CD8-positive, alpha-beta T cell (primary cell): ENCODE measurements at regions of chr2 and their contacts with region 1.

Region 1: DNA sequence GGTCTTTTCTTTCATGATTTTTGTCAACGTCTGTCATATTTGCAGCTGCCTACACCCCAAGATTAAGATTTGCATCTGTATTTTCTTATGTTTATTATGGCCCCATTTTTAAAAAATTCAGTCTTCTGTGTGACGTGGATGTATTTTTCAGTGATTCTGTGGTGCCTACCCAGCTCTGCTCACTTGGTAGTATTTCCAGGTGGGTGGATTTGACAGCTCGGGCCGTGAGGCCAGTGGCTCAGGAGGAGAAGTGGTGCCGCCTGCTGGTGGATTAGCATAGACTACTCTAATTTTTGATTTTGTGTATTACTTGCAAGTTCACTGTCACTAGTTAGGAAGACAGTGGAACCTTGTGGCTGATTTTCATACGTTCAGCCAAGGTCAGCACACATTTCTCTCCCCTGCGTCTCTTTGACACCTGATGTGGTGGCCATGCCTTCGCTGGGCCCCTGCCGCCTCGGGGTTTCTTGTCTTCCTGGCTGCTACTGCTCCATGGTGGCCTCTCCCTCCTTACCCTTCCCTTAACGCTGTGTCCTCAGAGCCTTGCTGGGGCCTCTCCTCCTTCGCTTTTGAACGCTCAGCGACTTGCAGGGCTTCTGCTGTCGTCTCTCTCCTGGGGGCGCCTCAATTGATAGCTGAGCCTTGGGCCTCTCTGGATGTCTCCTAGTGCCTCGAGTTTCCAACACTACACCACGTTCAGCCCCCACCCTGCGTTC is 89.3 kb downstream of the DGKD start:
- DNase-seq: peak; percentile 69 to 89 (median 87)
- ATAC-seq: peak; percentile 99
- H3K4me3 ChIP-seq: no peak overlapping the region
- H3K4me3 Mint-ChIP-seq: no peak overlapping the region
- H3K27ac ChIP-seq: no peak overlapping the region
- H3K27ac Mint-ChIP-seq: peak overlapping the region; percentile 69
- H3K4me1 ChIP-seq: peaks cover 14% of the 10 kb centered on the region
- H3K4me1 Mint-ChIP-seq: peaks cover 34% of the 10 kb centered on the region
- H3K27me3 ChIP-seq: no peaks in the 10 kb centered on the region
- H3K27me3 Mint-ChIP-seq: no peaks in the 10 kb centered on the region
- CTCF ChIP-seq: peak; percentile 87

Region 2: DNA sequence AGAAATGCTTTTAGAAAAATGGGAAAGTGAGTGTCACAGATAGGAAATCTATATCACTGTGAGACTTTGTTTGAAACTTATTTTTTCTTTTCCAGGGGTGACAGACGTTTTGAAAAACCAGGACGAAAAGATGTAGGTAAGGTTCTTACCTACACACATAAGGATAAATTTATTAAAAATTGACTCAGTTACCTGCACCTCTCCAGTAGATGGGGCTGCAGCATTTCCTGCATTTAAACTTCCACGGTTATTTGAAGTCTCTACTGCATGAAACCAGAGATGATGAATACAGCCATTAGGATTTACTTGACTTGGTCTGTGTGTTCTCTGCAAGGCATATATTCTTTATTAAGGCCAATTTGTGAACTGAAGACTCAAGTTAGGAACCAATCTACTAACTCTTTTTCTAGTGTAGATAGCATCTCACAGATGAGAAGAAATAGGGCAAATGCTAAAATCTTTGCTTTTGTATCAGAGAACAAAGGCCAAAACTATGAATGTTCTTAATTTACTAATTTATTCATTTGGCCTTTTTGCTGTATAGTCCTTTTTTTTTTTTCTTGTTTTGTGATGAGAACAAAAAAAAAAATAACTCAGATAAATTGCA is 682.2 kb before region 1 on chr2:
- CTCF ChIA-PET with region 1: no interaction called
- POLR2A ChIA-PET with region 1: no interaction called
- intact Hi-C with region 1: loop called in 1 of 2 experiments (anchors 1 kb)
- DNase-seq: peak in 7 of 9 experiments; percentile 2 to 63 (median 22)
- ATAC-seq: peak; percentile 69
- H3K4me3 ChIP-seq: no peak overlapping the region
- H3K4me3 Mint-ChIP-seq: no peak overlapping the region
- H3K27ac ChIP-seq: no peak overlapping the region
- H3K27ac Mint-ChIP-seq: no peak overlapping the region
- H3K4me1 ChIP-seq: no peaks in the 10 kb centered on the region
- H3K4me1 Mint-ChIP-seq: peaks cover 16% of the 10 kb centered on the region
- H3K27me3 ChIP-seq: no peaks in the 10 kb centered on the region
- H3K27me3 Mint-ChIP-seq: no peaks in the 10 kb centered on the region
- CTCF ChIP-seq: peak; percentile 50

Region 3: DNA sequence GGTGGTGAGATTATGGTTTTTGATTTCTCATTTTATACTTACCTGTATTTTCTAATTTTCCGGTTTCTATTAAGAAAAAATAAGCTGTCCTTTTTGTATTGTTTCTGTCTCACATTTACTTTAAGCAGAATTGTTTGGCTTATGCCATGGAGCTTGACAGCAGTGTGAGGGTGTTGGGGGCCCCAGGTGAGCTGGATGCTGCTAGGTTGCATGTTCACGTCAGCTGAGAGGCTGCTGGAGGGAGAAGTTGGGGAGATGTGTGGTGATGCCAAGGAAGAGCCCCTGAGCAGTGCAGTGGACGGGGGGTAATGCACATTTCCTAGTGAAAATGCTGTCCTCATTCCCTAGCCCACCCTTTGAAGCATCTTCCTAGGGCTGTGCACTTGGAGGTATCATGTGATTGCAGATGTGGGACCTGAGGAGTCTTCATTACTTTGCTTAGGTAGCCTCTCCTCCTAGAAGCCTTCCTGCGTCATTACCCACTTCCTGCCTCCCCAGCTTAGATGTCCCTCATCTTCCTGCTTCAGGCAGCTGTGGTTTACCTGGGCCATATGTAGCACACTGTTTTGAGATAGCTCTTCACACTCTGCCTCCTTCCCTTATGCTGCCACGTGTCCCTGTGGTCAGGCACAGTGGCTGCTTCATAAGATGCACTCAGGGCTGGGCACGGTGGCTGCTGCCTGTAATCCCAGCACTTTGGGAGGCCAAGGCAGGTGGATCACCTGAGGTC is 175.9 kb before region 1 on chr2:
- CTCF ChIA-PET with region 1: interaction called, 7 read pairs
- POLR2A ChIA-PET with region 1: interaction called, 5 read pairs
- intact Hi-C with region 1: loop called (anchors 5 kb)
- DNase-seq: peak; percentile 68 to 98 (median 84)
- ATAC-seq: peak; percentile 89
- H3K4me3 ChIP-seq: peak overlapping the region in 1 of 2 experiments; percentile 2
- H3K4me3 Mint-ChIP-seq: peak overlapping the region; percentile 68
- H3K27ac ChIP-seq: peak overlapping the region; percentile 62 to 95
- H3K27ac Mint-ChIP-seq: peak overlapping the region; percentile 94
- H3K4me1 ChIP-seq: peaks cover 59% of the 10 kb centered on the region
- H3K4me1 Mint-ChIP-seq: peaks cover 75% of the 10 kb centered on the region
- H3K27me3 ChIP-seq: no peaks in the 10 kb centered on the region
- H3K27me3 Mint-ChIP-seq: no peaks in the 10 kb centered on the region
- CTCF ChIP-seq: no peak

Region 4: DNA sequence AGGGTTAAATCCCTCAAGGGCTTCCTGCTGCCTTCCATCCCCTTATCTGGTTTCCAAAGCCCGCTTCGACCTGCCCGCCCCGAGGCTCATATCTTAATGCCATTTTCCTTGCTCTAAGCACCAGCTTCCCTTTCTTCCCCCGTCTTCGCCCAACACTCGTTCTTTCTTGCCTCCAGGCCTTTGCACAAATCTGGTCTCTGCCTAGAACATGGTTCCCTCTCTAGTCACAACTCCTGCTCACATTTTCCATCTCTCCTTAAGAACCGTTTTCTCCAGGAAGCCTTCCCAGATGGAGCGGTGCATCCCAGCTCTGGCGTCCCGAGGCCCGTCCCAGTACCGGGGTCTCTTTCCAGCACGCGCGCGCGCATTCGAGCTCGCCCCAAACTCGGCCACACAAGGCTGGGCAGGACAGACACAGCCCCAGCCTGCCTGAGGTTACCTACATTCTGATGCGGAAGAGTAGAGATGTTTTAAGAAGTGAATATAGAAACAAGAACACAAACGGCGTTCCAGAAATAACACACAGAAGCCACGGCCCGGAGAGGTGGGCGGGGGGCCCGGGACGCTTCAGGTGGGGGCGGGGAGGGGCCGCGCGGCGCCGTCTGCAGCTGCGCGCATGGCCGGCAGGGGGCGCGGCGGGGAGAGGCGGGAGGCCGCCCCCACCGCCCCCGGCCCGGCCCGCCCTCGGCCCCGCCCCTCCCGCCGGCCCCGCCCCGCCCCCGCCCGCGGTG is 89.7 kb before region 1 on chr2 and contains the start of gene DGKD:
- CTCF ChIA-PET with region 1: interaction called, 7 read pairs
- POLR2A ChIA-PET with region 1: no interaction called
- intact Hi-C with region 1: loop called (anchors 1 kb)
- DNase-seq: peak; percentile 63 to 86 (median 77)
- ATAC-seq: peak; percentile 90
- H3K4me3 ChIP-seq: peak within 1 kb of the TSS; percentile 83 to 87
- H3K4me3 Mint-ChIP-seq: peak within 1 kb of the TSS; percentile 92
- H3K27ac ChIP-seq: peak within 1 kb of the TSS; percentile 34 to 44
- H3K27ac Mint-ChIP-seq: peak within 1 kb of the TSS; percentile 89
- H3K4me1 ChIP-seq: peaks cover 53% of the 10 kb centered on the region
- H3K4me1 Mint-ChIP-seq: peaks cover 71% of the 10 kb centered on the region
- H3K27me3 ChIP-seq: no peaks in the 10 kb centered on the region
- H3K27me3 Mint-ChIP-seq: no peaks in the 10 kb centered on the region
- CTCF ChIP-seq: no peak
- total RNA-seq, gene DGKD: 209 to 244 TPM

Region 5: GRCh38 chr2:233404222-233404621 is 39.4 kb before region 1 on chr2:
- CTCF ChIA-PET with region 1: interaction called, 847 read pairs
- POLR2A ChIA-PET with region 1: interaction called, 8 read pairs
- intact Hi-C with region 1: loop called (anchors 1 kb)
- DNase-seq: peak; percentile 45 to 84 (median 73)
- ATAC-seq: peak; percentile 77
- H3K4me3 ChIP-seq: no peak overlapping the region
- H3K4me3 Mint-ChIP-seq: peak overlapping the region; percentile 26
- H3K27ac ChIP-seq: no peak overlapping the region
- H3K27ac Mint-ChIP-seq: peak overlapping the region; percentile 87
- H3K4me1 ChIP-seq: peaks cover 77% of the 10 kb centered on the region
- H3K4me1 Mint-ChIP-seq: peaks cover 81% of the 10 kb centered on the region
- H3K27me3 ChIP-seq: no peaks in the 10 kb centered on the region
- H3K27me3 Mint-ChIP-seq: no peaks in the 10 kb centered on the region
- CTCF ChIP-seq: peak; percentile 90

Region 6: GRCh38 chr2:233418761-233419625 is 24.6 kb before region 1 on chr2:
- CTCF ChIA-PET with region 1: interaction called, 81 read pairs
- POLR2A ChIA-PET with region 1: interaction called, 5 read pairs
- intact Hi-C with region 1: loop called in 1 of 2 experiments (anchors 2 kb)
- DNase-seq: peak; percentile 12 to 88 (median 74)
- ATAC-seq: peak; percentile 72
- H3K4me3 ChIP-seq: peak overlapping the region; percentile 44 to 61
- H3K4me3 Mint-ChIP-seq: peak overlapping the region; percentile 89
- H3K27ac ChIP-seq: peak overlapping the region; percentile 55 to 65
- H3K27ac Mint-ChIP-seq: peak overlapping the region; percentile 98
- H3K4me1 ChIP-seq: peaks cover 96% of the 10 kb centered on the region
- H3K4me1 Mint-ChIP-seq: peaks cover 96% of the 10 kb centered on the region
- H3K27me3 ChIP-seq: no peaks in the 10 kb centered on the region
- H3K27me3 Mint-ChIP-seq: no peaks in the 10 kb centered on the region
- CTCF ChIP-seq: no peak